Right ventricle myocardium inferior (tissue), 1 donor: ENCODE measurements at regions of chr2 and their contacts with region 1.

Region 1: GRCh38 chr2:32168513-32168912 is 2.8 kb downstream of the SLC30A6 start:
- DNase-seq: no peak
- ATAC-seq: no peak

Region 2: DNA sequence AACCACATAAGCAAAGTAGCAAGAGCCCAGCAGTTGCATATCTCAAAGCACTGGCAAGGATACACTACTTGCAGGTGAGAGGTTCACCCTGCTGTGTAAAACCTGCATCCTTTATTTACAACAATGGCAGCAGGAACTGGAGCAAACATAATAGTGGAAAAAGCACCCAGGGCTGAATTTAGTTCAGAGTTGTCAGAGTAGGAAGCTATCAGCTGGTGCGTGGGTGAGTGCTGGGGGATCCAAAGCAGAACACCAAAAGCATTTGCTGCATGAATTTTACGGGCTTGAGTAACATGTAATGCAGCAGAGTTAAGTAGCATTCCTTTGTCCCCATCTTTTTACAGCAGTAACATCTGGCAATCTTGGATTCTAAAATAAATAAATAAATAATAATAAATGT is 514.3 kb before region 1 on chr2:
- intact Hi-C with region 1: no loop called
- DNase-seq: no peak
- ATAC-seq: no peak

Region 3: GRCh38 chr2:31950946-31951562 is 217.5 kb before region 1 on chr2:
- intact Hi-C with region 1: no loop called
- DNase-seq: no peak
- ATAC-seq: no peak

Region 4: GRCh38 chr2:32010670-32011484 is 157.6 kb before region 1 on chr2 and contains the start of gene MEMO1:
- intact Hi-C with region 1: loop called (anchors 1 kb)
- DNase-seq: peak; percentile 97
- ATAC-seq: peak; percentile 88
- total RNA-seq, gene MEMO1: 50.0 TPM

Region 5: GRCh38 chr2:32277674-32278482 is 109.4 kb after region 1 on chr2 and contains the start of gene YIPF4:
- intact Hi-C with region 1: loop called (anchors 10 kb)
- DNase-seq: peak; percentile 92
- ATAC-seq: peak; percentile 98
- total RNA-seq, gene YIPF4: 77.2 TPM

Region 6: DNA sequence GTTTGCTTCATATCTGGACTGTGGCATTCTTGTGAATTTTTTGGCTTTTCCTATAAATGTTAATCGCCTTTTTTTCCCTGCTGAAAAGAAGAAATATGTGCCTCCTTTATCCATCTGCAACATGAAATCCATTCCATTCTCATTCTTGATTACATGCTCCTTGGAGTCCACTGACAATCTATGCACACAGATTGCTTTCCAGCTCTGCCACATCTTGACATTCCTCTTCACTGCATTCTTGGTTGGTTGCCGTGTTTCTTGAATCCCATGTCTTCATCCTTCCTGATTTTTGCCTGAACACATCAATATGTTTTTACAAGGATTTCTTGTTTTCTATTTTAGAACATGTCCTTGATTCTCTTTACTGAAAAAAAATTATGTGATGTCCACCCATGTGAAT is 161.6 kb after region 1 on chr2:
- intact Hi-C with region 1: no loop called
- DNase-seq: no peak
- ATAC-seq: no peak